B cell (primary cell): ENCODE measurements at regions of chr6 and their contacts with region 1.

Region 1: DNA sequence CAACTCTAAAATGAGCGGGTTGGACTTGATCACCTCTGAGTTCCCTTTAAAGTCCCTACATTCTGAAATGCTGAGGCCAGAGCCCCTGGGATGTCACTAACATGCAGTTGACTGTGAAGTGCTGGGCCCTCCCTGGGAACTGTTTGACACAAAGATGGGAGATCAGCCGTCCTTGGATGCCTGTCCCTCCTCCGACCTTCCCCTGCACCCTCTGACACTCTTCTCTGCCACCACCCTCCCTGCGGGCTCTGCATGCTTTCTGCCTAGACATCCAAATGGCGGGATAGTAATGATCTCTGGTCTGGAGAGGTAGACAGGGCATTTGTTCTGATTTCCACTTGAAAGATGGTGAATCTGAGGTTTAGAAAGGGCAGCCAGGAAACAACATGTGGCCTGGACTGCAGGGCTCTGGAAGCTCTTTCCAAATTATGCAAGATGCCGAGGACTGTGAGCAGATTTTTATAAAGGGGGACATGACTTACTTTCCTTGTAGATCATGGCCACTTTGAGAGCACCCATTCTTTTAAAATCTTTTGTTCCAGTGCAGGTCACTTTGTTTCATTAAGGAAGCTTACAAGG is 113.2 kb downstream of the ZDHHC14 start:
- DNase-seq: no peak
- ATAC-seq: no peak
- H3K4me3 ChIP-seq: no peak overlapping the region
- H3K4me3 Mint-ChIP-seq: no peak overlapping the region
- H3K27ac ChIP-seq: no peak overlapping the region
- H3K27ac Mint-ChIP-seq: no peak overlapping the region
- H3K4me1 ChIP-seq: peaks cover 13 to 41% of the 10 kb centered on the region in 2 donors
- H3K4me1 Mint-ChIP-seq: peaks cover 38% of the 10 kb centered on the region
- H3K27me3 ChIP-seq: no peaks in the 10 kb centered on the region
- H3K27me3 Mint-ChIP-seq: peaks cover 5% of the 10 kb centered on the region
- CTCF ChIP-seq: no peak

Region 2: GRCh38 chr6:157479464-157480303 is 14.5 kb before region 1 on chr6:
- CTCF ChIA-PET with region 1: no interaction called
- POLR2A ChIA-PET with region 1: no interaction called
- intact Hi-C with region 1: loop called (anchors 2 kb)
- DNase-seq: no peak
- ATAC-seq: no peak
- H3K4me3 ChIP-seq: no peak overlapping the region
- H3K4me3 Mint-ChIP-seq: no peak overlapping the region
- H3K27ac ChIP-seq: no peak overlapping the region
- H3K27ac Mint-ChIP-seq: no peak overlapping the region
- H3K4me1 ChIP-seq: peaks cover 4 to 25% of the 10 kb centered on the region in 2 donors
- H3K4me1 Mint-ChIP-seq: peaks cover 25% of the 10 kb centered on the region
- H3K27me3 ChIP-seq: no peaks in the 10 kb centered on the region
- H3K27me3 Mint-ChIP-seq: no peaks in the 10 kb centered on the region
- CTCF ChIP-seq: no peak